Calu3 (cell line): ENCODE measurements at regions of chr12 and their contacts with region 1.

Region 1: GRCh38 chr12:52372216-52373154 is 5.2 kb upstream of the KRT85 start:
- DNase-seq: peak; percentile 77
- H3K4me3 Mint-ChIP-seq: no peak overlapping the region
- H3K27ac Mint-ChIP-seq: no peak overlapping the region
- H3K4me1 Mint-ChIP-seq: peaks cover 14% of the 10 kb centered on the region
- H3K27me3 Mint-ChIP-seq: peaks cover 11% of the 10 kb centered on the region
- CTCF ChIP-seq: peak; percentile 52

Region 2: DNA sequence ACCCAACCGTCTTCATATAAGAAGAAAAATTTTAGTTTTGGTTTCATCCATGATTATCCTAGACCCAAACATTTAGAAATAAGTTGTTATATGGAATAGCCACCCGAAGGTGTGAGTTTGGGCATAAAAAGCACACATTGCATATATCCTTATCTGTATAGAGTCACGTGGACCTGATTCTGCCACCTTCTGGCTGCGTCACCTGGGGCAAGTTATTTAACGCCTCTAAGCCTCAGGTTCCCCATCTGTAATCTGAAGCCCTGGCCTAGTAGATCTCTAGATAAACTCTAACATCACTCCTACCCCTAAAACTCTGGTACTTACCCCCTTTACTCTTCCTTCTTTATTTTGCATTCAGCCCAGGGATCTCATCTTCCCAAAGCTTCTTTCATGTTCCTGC is 162.0 kb after region 1 on chr12:
- CTCF ChIA-PET with region 1: interaction called, 3 read pairs
- intact Hi-C with region 1: loop called (anchors 1 kb)
- DNase-seq: peak; percentile 24
- H3K4me3 Mint-ChIP-seq: no peak overlapping the region
- H3K27ac Mint-ChIP-seq: no peak overlapping the region
- H3K4me1 Mint-ChIP-seq: no peaks in the 10 kb centered on the region
- H3K27me3 Mint-ChIP-seq: no peaks in the 10 kb centered on the region
- CTCF ChIP-seq: peak; percentile 24

Region 3: GRCh38 chr12:52582971-52583456 is 210.5 kb after region 1 on chr12:
- CTCF ChIA-PET with region 1: no interaction called
- intact Hi-C with region 1: loop called (anchors 10 kb)
- DNase-seq: peak; percentile 58
- H3K4me3 Mint-ChIP-seq: no peak overlapping the region
- H3K27ac Mint-ChIP-seq: no peak overlapping the region
- H3K4me1 Mint-ChIP-seq: peaks cover 10% of the 10 kb centered on the region
- H3K27me3 Mint-ChIP-seq: peaks cover 48% of the 10 kb centered on the region
- CTCF ChIP-seq: peak; percentile 53

Region 4: GRCh38 chr12:52847335-52848102 is 475.0 kb after region 1 on chr12:
- CTCF ChIA-PET with region 1: no interaction called
- intact Hi-C with region 1: no loop called
- DNase-seq: peak; percentile 78
- H3K4me3 Mint-ChIP-seq: no peak overlapping the region
- H3K27ac Mint-ChIP-seq: peak overlapping the region; percentile 39
- H3K4me1 Mint-ChIP-seq: peaks cover 14% of the 10 kb centered on the region
- H3K27me3 Mint-ChIP-seq: no peaks in the 10 kb centered on the region
- CTCF ChIP-seq: no peak

Region 5: DNA sequence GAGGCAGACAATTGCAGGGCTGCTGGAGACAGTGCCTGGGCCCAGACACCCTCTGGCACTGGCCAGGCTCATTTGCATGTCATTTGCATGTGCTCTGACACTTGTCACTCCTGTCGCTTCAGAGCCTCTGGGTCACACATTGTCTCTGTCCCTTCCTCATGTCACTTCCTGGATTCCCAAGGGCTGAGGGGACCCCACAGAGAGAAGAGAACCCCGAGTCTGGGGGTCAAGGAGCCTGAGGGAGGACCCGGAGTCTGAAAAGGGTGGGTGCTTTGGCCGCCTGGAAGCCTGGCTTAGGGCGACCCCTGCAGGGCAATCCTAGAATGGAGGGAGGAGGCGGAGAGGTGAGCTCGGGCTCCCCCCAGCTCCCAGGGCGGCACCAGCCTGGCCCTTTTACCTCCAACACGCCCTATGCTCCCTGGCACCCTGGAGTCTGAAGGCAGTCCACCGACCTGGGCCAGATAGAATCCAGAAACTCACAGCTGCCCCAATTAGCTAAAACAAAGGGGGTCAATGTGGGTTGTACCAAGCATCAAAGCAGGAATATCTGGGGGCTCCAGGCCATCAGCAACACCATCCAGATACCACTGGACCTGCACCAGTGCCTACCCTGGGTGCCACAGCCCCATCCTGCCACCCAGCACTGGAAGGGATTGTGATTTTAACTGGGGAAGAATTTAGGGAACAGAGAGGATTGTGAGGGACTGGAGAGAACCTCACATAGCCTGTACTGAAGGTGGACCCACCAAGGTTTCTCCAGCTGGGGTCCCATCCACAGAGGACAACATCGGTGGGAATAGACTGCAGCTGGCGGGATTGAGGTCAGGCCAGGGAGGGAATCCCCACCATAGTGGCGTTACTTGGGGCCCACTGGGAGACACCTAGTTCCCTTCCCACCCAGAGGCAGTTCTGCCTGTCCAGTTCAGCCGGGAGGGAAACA is 498.1 kb after region 1 on chr12:
- CTCF ChIA-PET with region 1: interaction called, 5 read pairs
- intact Hi-C with region 1: loop called (anchors 2 kb)
- DNase-seq: peak; percentile 81
- H3K4me3 Mint-ChIP-seq: no peak overlapping the region
- H3K27ac Mint-ChIP-seq: peak overlapping the region; percentile 99
- H3K4me1 Mint-ChIP-seq: peaks cover 67% of the 10 kb centered on the region
- H3K27me3 Mint-ChIP-seq: no peaks in the 10 kb centered on the region
- CTCF ChIP-seq: peak; percentile 39

Region 6: DNA sequence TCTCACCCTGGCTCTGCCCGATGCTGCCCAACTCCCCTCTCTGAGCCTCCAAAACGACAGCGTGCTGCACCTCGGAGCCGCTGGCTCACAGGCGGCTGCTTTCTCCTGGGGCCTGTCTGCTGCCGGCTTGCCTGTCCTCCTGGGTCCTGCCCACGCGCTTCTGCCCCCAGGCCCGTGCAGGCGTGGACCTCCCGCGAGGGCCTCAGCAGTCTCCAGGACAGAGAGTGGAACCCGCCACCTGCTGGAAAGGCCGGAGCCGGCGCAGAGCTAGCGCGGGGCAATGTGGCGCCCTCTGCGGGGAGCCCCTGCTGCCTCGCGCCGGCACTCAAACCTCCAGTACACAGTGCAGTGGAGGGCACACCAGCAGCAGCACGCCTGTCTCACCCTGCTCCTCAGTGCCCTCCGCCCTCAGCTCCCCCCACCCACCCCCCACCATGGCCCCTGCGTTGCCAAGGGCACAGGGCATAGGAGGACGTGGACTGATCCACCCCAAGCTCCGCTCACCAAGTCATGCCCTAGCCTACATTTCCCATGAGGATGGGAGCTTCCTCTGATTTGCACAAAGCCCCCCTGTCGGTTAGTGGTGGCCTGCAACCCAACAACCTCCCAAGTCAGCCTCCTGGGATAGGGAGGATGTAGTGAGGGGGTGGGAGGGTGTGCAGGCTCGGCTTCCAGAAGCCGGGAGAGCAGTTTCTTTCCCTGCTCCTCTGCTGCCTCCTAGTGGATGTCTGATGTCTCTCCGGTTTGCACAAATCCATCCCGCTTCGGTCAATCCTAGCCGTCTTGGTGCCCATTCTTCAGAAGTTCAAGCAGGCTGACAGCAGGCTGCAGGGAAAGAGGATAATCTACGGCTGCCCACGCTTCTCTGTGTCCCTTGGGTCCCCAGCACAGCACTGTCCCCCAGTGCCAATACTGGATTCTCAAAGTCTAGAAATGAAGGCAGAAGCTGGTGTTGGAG is 507.2 kb after region 1 on chr12:
- CTCF ChIA-PET with region 1: interaction called, 22 read pairs
- intact Hi-C with region 1: no loop called
- DNase-seq: peak; percentile 85
- H3K4me3 Mint-ChIP-seq: peak overlapping the region; percentile 48
- H3K27ac Mint-ChIP-seq: peak overlapping the region; percentile 18
- H3K4me1 Mint-ChIP-seq: peaks cover 35% of the 10 kb centered on the region
- H3K27me3 Mint-ChIP-seq: no peaks in the 10 kb centered on the region
- CTCF ChIP-seq: peak; percentile 79

Region 7: DNA sequence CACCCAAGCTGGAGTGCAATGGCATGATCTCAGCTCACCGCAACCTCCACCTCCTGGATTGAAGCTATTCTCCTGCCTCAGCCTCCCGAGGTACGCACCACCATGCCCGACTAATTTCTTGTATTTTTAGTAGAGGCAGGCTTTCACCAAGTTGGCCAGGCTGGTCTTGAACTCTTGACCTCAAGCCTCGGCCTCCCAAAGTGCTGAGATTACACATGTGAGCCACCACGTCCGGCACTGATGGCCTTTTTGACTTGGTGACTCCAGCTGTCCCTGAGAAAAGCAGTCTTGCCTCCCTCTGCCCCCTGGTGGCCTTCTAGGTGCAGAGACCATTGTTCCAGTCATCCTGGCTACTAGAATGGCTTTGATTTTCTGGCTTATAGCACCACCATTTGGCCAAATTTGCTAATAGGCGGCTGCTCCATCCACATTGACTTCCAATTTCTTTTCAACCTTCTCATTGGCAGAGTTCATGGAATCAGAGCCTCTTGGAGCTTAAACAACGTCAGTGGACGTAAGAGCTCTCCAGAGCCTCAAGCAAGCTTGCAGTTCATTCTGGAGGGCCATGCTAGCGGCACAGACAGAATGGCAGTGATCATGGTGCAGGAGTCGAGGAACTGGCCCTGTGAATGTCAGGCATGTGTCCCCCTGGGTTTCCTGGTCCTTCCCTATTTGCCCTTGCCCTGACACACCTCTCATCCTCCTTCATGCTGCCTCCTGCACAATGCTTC is 608.4 kb after region 1 on chr12:
- CTCF ChIA-PET with region 1: interaction called, 4 read pairs
- intact Hi-C with region 1: loop called (anchors 10 kb)
- DNase-seq: peak; percentile 89
- H3K4me3 Mint-ChIP-seq: no peak overlapping the region
- H3K27ac Mint-ChIP-seq: peak overlapping the region; percentile 47
- H3K4me1 Mint-ChIP-seq: peaks cover 36% of the 10 kb centered on the region
- H3K27me3 Mint-ChIP-seq: no peaks in the 10 kb centered on the region
- CTCF ChIP-seq: peak; percentile 82